CD4-positive, alpha-beta T cell (primary cell): ENCODE measurements at regions of chr19 and their contacts with region 1.

Region 1: GRCh38 chr19:56170261-56170660 is 5.5 kb upstream of the GALP start:
- DNase-seq: no peak
- ATAC-seq: no peak
- H3K4me3 ChIP-seq: no peak overlapping the region
- H3K4me3 Mint-ChIP-seq: no peak overlapping the region
- H3K27ac ChIP-seq: no peak overlapping the region
- H3K27ac Mint-ChIP-seq: no peak overlapping the region
- H3K4me1 ChIP-seq: peaks cover 3% of the 10 kb centered on the region
- H3K4me1 Mint-ChIP-seq: peaks cover 4% of the 10 kb centered on the region
- H3K27me3 ChIP-seq: peaks cover 0 to 5% of the 10 kb centered on the region in 2 experiments
- H3K27me3 Mint-ChIP-seq: peaks cover 6% of the 10 kb centered on the region
- CTCF ChIP-seq: no peak

Region 2: DNA sequence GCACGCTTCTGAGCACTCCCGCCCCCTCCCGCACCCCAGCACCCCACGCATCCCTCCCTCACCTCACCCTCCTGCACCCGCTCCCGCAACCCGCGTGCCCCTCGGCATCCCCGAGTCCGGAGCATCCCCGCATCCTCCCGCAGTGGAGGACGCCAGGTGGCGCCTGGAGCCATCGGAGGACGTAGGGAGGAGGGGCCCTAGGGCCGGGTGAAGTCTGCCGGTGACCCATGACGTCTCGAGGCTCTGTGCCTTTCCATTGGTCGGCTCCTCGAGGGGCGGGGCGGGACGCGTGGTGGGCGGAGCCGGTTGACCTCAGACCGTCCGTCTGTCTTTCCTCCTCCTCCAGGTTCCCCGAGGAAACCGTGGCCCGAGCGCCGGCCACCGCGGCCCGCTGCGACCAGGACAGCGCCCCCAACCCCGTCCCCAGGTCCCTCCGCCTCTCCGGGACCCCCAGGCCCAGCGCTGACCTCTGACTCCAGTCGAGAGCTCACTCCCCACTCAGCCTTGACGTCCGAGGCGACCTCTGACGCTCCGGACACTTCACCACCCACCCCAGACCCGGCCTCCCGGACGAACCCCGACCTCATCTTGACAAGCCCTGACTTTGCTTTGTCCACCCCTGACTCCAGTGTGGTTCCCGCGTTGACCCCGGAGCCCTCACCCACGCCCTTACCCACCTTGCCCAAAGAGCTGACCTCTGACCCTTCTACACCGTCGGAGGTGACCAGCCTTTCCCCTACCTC is 653.2 kb before region 1 on chr19:
- CTCF ChIA-PET with region 1: no interaction called
- POLR2A ChIA-PET with region 1: no interaction called
- intact Hi-C with region 1: loop called in 1 of 2 experiments (anchors 5 kb)
- DNase-seq: peak; percentile 82 to 95 (median 88)
- ATAC-seq: peak; percentile 100
- H3K4me3 ChIP-seq: peak overlapping the region; percentile 32
- H3K4me3 Mint-ChIP-seq: peak overlapping the region; percentile 74
- H3K27ac ChIP-seq: peak overlapping the region in 1 of 2 donors; percentile 37
- H3K27ac Mint-ChIP-seq: peak overlapping the region; percentile 73
- H3K4me1 ChIP-seq: peaks cover 11% of the 10 kb centered on the region
- H3K4me1 Mint-ChIP-seq: peaks cover 4% of the 10 kb centered on the region
- H3K27me3 ChIP-seq: no peaks in the 10 kb centered on the region
- H3K27me3 Mint-ChIP-seq: no peaks in the 10 kb centered on the region
- CTCF ChIP-seq: peak; percentile 78

Region 3: DNA sequence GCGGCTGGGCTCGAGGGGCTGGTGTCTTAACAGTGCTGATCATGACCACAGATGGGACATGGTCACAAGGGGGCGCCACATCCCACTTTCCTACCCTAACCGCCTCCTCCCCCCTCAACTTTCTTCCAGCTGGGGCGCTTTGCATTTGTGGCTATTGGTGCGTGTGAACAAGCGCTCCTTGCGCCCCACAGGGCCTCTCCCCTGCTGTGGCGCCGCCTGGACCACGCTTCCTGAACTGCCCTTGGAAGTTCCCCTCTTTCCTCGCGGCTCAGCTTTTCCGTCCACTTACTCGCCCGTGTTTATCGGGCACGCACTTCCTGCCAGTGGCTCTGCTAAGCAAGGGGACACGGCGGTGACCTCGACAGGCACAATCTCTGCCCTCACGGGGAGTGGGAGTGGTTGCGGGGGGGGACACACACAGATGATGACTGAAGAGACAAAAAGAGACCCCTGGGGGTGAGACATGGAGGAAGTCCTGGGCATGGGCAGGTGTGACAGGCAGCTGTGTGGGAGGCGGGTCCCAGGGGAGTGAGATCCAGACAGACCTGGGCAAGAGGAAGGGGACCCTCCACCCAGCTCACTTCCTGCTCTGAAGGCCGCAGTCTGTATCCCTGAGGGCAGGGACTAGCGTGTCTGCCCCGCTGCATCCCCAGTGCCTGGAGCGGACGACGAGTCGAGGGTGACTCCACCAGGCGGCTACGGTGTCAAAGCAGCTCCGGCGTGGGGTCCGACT is 89.4 kb before region 1 on chr19:
- CTCF ChIA-PET with region 1: interaction called, 5 read pairs
- POLR2A ChIA-PET with region 1: no interaction called
- intact Hi-C with region 1: loop called in 1 of 2 experiments (anchors 2 kb)
- DNase-seq: peak; percentile 50 to 83 (median 60)
- ATAC-seq: peak; percentile 48
- H3K4me3 ChIP-seq: peak overlapping the region; percentile 47
- H3K4me3 Mint-ChIP-seq: peak overlapping the region; percentile 76
- H3K27ac ChIP-seq: no peak overlapping the region
- H3K27ac Mint-ChIP-seq: no peak overlapping the region
- H3K4me1 ChIP-seq: peaks cover 10% of the 10 kb centered on the region
- H3K4me1 Mint-ChIP-seq: peaks cover 14% of the 10 kb centered on the region
- H3K27me3 ChIP-seq: peaks cover 3 to 8% of the 10 kb centered on the region in 2 experiments
- H3K27me3 Mint-ChIP-seq: peaks cover 17% of the 10 kb centered on the region
- CTCF ChIP-seq: peak; percentile 38

Region 4: GRCh38 chr19:56105090-56105701 is 65.1 kb before region 1 on chr19:
- CTCF ChIA-PET with region 1: interaction called, 8 read pairs
- POLR2A ChIA-PET with region 1: no interaction called
- intact Hi-C with region 1: loop called (anchors 1 kb)
- DNase-seq: peak; percentile 23 to 76 (median 52)
- ATAC-seq: peak; percentile 89
- H3K4me3 ChIP-seq: no peak overlapping the region
- H3K4me3 Mint-ChIP-seq: no peak overlapping the region
- H3K27ac ChIP-seq: no peak overlapping the region
- H3K27ac Mint-ChIP-seq: peak overlapping the region; percentile 54
- H3K4me1 ChIP-seq: peaks cover 45% of the 10 kb centered on the region
- H3K4me1 Mint-ChIP-seq: peaks cover 35% of the 10 kb centered on the region
- H3K27me3 ChIP-seq: no peaks in the 10 kb centered on the region
- H3K27me3 Mint-ChIP-seq: no peaks in the 10 kb centered on the region
- CTCF ChIP-seq: peak; percentile 71

Region 5: DNA sequence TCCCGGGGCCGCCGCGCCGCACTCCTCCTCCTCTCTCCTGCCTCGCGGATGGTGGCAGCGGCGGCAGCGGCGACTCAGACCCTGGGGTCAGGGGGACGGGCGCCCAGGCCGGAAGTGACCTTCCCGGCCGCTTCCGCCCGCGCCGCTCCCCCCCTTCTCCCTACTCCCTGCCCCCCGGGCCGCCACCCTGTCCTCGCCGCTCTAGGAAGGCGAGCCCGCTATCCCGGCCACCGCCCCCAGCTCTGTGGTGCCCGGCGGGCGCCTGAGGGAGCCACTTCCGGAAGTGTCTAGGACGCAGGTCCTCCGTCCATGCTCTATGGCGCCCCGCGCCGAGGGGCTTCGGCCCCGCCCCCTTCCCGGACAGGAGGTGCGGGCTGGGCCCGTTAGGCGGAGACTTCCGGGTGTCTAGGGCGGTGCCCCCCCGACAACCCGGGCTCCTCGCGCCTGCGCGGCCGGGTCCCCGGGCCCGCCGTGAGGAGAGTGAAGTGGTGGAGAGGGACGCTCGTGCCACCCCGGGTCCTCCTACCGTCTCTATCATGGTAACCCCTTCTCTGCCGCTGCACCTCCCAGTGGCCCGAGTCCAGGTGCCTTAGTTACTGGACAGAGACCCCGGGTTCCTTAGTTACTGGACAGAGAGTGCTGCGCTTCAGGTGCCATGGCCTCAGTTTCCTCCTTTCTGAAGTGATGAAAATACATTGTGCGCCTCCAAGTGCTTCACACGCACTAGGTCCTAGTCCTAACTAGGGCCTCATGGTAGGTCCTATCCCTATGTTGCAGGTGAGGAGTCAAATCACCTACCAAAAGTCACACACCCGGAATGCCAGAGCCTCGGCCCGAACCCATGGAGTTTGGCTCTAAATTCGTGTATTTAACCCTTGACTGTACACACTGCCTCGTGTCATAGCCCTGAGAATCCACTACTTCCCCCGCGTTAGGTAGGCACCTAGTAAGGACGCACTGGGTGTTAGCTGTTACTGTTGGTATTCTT is 48.8 kb before region 1 on chr19 and contains the start of gene ZNF787:
- CTCF ChIA-PET with region 1: no interaction called
- POLR2A ChIA-PET with region 1: no interaction called
- intact Hi-C with region 1: no loop called
- DNase-seq: peak; percentile 93 to 99 (median 97)
- ATAC-seq: peak; percentile 84
- H3K4me3 ChIP-seq: peak within 1 kb of the TSS; percentile 73
- H3K4me3 Mint-ChIP-seq: peak within 1 kb of the TSS; percentile 98
- H3K27ac ChIP-seq: peak within 1 kb of the TSS; percentile 92 to 98
- H3K27ac Mint-ChIP-seq: peak within 1 kb of the TSS; percentile 96
- H3K4me1 ChIP-seq: peaks cover 52% of the 10 kb centered on the region
- H3K4me1 Mint-ChIP-seq: peaks cover 73% of the 10 kb centered on the region
- H3K27me3 ChIP-seq: no peaks in the 10 kb centered on the region
- H3K27me3 Mint-ChIP-seq: no peaks in the 10 kb centered on the region
- CTCF ChIP-seq: no peak
- total RNA-seq, gene ZNF787: 11.4 to 11.5 TPM

Region 6: DNA sequence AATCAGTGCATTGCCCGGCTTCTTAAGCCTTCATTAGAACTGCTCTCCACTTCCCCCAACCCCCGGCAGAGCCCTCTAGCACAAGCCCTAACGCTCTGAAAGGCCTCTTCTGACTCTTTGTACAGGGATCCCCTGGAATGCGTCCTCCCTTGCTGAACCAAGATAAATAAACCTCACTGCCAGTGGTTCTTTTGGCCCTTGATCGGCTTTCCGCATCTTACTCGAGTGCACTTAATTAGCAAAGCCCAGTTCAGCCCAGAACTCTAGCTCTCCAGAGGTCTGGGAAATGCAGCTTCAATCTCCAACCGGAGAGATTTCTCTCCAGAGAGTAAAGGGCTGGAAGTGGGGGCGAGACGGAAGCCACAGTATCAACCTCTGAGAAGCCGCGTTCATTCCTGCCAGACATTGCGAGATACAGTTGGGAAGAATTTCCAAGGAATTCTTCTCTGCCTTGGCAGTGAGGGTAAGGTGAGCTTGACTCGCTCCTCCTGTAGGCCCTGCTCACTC is 37.9 kb before region 1 on chr19:
- CTCF ChIA-PET with region 1: no interaction called
- POLR2A ChIA-PET with region 1: no interaction called
- intact Hi-C with region 1: no loop called
- DNase-seq: no peak
- ATAC-seq: no peak
- H3K4me3 ChIP-seq: no peak overlapping the region
- H3K4me3 Mint-ChIP-seq: no peak overlapping the region
- H3K27ac ChIP-seq: no peak overlapping the region
- H3K27ac Mint-ChIP-seq: no peak overlapping the region
- H3K4me1 ChIP-seq: no peaks in the 10 kb centered on the region
- H3K4me1 Mint-ChIP-seq: no peaks in the 10 kb centered on the region
- H3K27me3 ChIP-seq: no peaks in the 10 kb centered on the region
- H3K27me3 Mint-ChIP-seq: no peaks in the 10 kb centered on the region
- CTCF ChIP-seq: no peak

Region 7: GRCh38 chr19:56201973-56202372 is 31.7 kb after region 1 on chr19 and contains the start of gene ZSCAN5C:
- CTCF ChIA-PET with region 1: no interaction called
- POLR2A ChIA-PET with region 1: no interaction called
- intact Hi-C with region 1: no loop called
- DNase-seq: no peak
- ATAC-seq: no peak
- H3K4me3 ChIP-seq: no peak within 1 kb of the TSS
- H3K4me3 Mint-ChIP-seq: no peak within 1 kb of the TSS
- H3K27ac ChIP-seq: no peak within 1 kb of the TSS
- H3K27ac Mint-ChIP-seq: no peak within 1 kb of the TSS
- H3K4me1 ChIP-seq: no peaks in the 10 kb centered on the region
- H3K4me1 Mint-ChIP-seq: no peaks in the 10 kb centered on the region
- H3K27me3 ChIP-seq: no peaks in the 10 kb centered on the region
- H3K27me3 Mint-ChIP-seq: no peaks in the 10 kb centered on the region
- CTCF ChIP-seq: no peak
- total RNA-seq, gene ZSCAN5C: not detected